Posterior cingulate gyrus (tissue), 11 donors: ENCODE measurements at regions of chr6 and their contacts with region 1.

Region 1: DNA sequence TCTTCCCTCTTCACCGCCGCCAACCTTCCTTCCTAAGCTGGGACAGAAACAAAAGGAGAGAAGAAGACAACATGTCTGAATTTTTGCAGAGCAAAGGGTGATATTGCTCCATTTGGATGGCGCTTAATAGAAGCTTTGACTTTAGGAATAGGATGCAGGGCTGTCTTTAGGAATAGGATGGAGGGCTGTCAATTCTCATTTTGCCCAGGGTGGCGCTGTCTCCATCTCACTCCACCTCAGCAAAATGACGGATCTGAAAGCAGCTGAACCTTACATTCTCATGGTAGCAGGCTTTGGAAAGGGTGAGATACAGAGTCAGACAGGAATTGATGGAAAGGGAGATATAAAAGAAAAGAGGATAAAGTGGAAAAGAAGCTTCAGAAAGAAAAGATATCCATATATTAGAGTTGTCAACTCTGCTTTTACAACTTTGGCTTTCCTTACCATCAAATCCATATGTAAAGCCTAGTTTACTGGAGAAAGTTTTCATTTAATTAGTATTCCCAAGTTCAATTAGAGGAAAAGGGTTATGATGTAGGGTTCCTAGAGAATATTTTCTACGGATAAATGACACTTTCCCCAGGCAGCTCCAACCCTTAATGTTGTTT is 2.4 kb downstream of the MTCL3 start:
- DNase-seq: peak in 9 of 10 donors; percentile 47 to 94 (median 60)

Region 2: GRCh38 chr6:127266178-127266891 is 250.4 kb before region 1 on chr6 and contains the start of gene RNF146:
- intact Hi-C with region 1: loop called (anchors 5 kb)
- DNase-seq: peak; percentile 74 to 96 (median 76)

Region 3: DNA sequence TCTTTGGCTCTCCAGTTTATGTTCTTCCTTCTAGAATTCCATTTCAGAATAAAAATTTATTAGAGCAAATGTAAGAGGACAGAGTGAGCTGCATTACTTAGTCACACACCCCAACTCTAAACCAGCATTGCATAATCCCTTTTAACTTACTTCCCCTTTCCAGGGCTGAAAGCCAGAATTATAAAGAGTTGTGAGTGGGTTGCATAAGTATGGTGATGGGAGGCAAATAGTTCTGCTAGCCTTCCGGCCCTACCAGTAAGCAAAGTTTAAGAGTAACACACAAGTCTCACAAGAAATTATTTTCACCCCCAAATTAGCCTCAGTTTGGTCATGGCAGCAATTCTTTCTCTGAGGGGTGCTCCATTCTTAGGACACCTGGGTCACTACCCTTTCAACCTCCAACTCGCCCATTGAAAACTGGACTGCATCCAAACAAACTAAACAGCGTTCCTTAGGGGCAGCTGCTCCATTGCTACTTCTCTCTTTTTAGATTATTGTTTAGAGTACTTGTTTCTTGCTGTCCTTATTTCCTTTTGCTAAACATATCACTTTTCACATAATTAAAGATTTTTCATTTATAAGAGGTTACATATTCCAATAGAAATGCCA is 59.2 kb before region 1 on chr6:
- intact Hi-C with region 1: no loop called
- DNase-seq: no peak